PC-3 (cell line): ENCODE measurements at regions of chr4 and their contacts with region 1.

Region 1: DNA sequence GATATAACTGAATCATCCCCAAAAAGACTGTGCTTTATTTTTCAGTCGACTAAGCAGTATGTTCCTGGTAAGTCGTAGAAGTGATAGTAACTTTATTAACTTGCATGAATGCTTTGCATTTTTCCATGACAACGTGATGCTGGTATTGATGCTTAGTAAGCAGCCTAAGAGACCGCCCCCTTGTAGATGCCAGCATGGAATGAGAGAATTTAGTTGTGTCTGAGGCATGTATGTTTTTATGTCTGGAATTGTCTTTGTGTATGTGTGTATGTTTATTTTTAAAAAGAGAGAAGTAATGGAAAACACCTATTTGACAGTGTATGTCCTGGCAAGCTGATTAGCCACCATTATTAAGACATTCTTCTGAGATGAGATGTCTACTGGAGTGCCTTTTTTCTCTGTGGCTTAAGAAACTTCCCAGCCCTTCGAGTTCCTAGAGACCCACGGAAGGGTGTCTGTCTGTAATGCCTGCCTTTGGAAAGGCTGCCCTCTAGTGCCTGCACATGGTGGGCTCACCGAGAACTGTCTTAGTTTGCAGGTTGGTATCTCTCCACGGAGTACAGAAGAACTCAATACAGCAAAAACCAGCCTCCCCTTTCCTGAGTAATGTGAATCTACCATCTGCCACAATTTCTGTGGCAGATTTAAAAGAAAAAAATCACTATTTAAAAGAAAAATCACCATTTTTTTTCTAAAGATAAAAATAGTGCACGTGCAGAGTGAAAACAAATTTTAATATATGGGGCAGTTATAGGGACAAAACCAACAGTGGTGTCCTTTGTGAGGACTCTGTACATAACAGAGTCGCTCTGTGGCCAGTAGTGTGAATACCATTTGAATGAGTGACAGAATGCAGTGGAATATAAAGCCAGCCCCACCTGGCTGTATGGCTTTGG is 85.9 kb downstream of the AASDH start:
- DNase-seq: peak; percentile 92
- ATAC-seq: peak; percentile 99
- H3K4me3 ChIP-seq: no peak overlapping the region
- H3K27ac ChIP-seq: no peak overlapping the region
- H3K4me1 ChIP-seq: peaks cover 6% of the 10 kb centered on the region; the same call in 1 of the 2 replicates
- H3K27me3 ChIP-seq: no peaks in the 10 kb centered on the region
- CTCF ChIP-seq: peak; percentile 98

Region 2: GRCh38 chr4:56048702-56049431 is 252.6 kb before region 1 on chr4:
- CTCF ChIA-PET with region 1: no interaction called
- POLR2A ChIA-PET with region 1: no interaction called
- intact Hi-C with region 1: loop called (anchors 5 kb)
- DNase-seq: peak; percentile 61
- ATAC-seq: peak; percentile 92
- H3K4me3 ChIP-seq: peak overlapping the region; percentile 79
- H3K27ac ChIP-seq: no peak overlapping the region
- H3K4me1 ChIP-seq: peaks cover 7% of the 10 kb centered on the region; the same call in 1 of the 2 replicates
- H3K27me3 ChIP-seq: peaks cover 32% of the 10 kb centered on the region
- CTCF ChIP-seq: peak; percentile 24; the same call in 1 of the 2 replicates

Region 3: DNA sequence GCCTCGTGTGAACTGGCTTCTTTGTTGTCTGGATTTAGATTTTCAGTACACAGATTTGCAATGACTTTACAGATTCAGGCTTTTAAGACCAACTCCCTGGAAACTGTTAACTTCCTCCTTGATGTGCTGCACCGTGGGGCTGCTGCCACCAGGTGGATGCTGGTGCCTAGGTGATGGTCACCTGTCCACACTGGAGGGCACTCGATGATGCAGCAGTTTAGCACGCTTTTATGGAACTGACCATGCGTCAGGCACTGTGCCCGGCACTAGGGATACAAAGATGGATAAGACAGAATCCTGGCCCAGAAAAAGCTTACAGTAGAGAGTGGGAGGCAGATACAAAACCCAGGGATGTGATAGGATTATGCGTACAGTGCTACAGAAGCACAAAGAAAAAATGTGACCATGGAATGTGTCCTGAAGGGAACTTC is 172.0 kb before region 1 on chr4:
- CTCF ChIA-PET with region 1: no interaction called
- POLR2A ChIA-PET with region 1: no interaction called
- intact Hi-C with region 1: loop called (anchors 1 kb)
- DNase-seq: peak; percentile 68
- ATAC-seq: peak; percentile 84
- H3K4me3 ChIP-seq: no peak overlapping the region
- H3K27ac ChIP-seq: no peak overlapping the region
- H3K4me1 ChIP-seq: peaks cover 5% of the 10 kb centered on the region; the same call in 1 of the 2 replicates
- H3K27me3 ChIP-seq: peaks cover 4% of the 10 kb centered on the region; the same call in 1 of the 2 replicates
- CTCF ChIP-seq: peak; percentile 86